ENCODE measurements at regions of chr4 and their contacts with region 1.

Region 1: DNA sequence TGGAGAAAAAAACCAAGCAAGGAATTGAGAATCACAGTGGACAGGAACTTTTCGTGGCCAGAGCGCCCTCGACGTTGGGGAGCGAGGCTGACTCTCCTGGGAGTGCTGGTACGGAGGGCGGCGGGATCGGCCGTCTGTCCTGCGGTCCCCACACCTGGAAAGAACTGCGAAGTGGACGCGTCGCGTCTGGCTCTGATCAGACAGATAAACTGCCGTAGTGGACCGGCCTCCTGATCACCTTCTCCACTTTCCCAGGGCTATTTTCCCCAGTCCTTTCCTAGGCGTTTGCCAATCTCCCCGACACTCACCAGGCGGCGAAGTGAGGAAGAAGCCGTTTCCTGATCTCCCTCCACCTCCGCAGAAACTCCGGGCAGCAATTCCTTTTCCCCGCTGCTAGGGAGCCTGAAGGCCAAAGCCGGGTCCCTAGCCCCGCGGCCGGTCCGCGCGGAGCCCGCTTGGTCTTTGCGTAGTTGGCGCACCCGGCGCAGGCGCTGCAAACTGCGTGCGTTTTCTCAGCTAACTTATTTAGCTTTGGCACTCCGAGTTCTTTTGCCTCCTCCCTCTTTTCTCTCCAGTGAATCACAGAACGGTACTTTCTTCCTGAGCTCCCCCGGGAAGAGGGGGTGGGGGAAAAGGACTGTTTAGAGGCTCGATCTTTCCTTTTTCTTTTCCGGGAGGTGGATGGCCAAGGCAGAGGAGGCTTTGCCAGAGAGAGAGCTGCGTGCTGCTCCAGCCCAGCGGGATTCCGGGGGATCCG is at the start of gene ARSJ:
- DNase-seq: peak; percentile 87
- H3K4me3 Mint-ChIP-seq: peak within 1 kb of the TSS; percentile 94
- H3K27ac Mint-ChIP-seq: peak within 1 kb of the TSS; percentile 95
- H3K4me1 Mint-ChIP-seq: peaks cover 19% of the 10 kb centered on the region
- H3K27me3 Mint-ChIP-seq: no peaks in the 10 kb centered on the region
- CTCF ChIP-seq: peak; percentile 34
- total RNA-seq, gene ARSJ: 36.2 and 50.7 TPM in 2 replicates

Region 2: GRCh38 chr4:113761620-113762185 is 217.6 kb before region 1 on chr4 and contains the start of gene CAMK2D:
- CTCF ChIA-PET with region 1: no interaction called
- POLR2A ChIA-PET with region 1: interaction called, 40 read pairs
- intact Hi-C with region 1: loop called (anchors 2 kb)
- DNase-seq: peak; percentile 89
- H3K4me3 Mint-ChIP-seq: peak within 1 kb of the TSS; percentile 99
- H3K27ac Mint-ChIP-seq: peak within 1 kb of the TSS; percentile 96
- H3K4me1 Mint-ChIP-seq: peaks cover 13% of the 10 kb centered on the region
- H3K27me3 Mint-ChIP-seq: no peaks in the 10 kb centered on the region
- CTCF ChIP-seq: no peak
- total RNA-seq, gene CAMK2D: 32.1 and 55.1 TPM in 2 replicates

Region 3: DNA sequence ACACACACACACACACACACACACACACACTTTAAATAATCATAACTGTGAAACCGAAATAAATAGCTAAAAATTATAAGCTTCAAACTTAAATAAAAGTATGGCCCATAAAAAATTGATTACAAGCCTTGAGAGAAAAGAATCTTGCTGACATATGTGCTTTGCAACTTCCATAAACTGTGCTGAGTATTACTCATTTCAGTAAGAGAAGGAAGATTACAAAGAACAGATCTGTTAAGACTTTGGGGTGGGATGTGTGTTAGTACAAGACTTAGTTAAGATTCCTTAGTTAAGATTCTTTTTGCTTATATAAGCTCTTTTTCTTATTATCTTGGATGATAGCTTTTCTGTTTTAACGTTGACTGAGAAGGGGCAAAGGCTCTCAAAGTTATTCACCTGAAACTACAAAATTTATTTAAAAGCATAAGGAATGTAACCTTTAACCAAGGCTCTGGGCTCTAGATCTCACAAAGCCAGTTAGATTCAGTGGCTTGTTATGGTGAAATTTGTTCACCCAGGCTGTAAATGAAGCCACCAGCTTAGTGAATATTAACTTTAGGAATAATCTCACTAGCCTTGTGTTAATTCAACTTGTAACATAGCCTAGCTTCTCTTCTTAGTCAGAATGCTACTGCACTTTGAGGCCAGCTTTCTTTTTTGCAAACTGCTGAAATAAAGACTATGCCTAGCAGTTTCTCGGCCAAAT is 58.1 kb before region 1 on chr4:
- CTCF ChIA-PET with region 1: no interaction called
- POLR2A ChIA-PET with region 1: interaction called, 12 read pairs
- intact Hi-C with region 1: no loop called
- DNase-seq: no peak
- H3K4me3 Mint-ChIP-seq: no peak overlapping the region
- H3K27ac Mint-ChIP-seq: no peak overlapping the region
- H3K4me1 Mint-ChIP-seq: peaks cover 34% of the 10 kb centered on the region
- H3K27me3 Mint-ChIP-seq: no peaks in the 10 kb centered on the region
- CTCF ChIP-seq: no peak

Region 4: GRCh38 chr4:114005569-114006442 is 26.5 kb after region 1 on chr4:
- CTCF ChIA-PET with region 1: interaction called, 4 read pairs
- POLR2A ChIA-PET with region 1: interaction called, 12 read pairs
- intact Hi-C with region 1: no loop called
- DNase-seq: peak; percentile 60
- H3K4me3 Mint-ChIP-seq: no peak overlapping the region
- H3K27ac Mint-ChIP-seq: peak overlapping the region; percentile 55
- H3K4me1 Mint-ChIP-seq: peaks cover 19% of the 10 kb centered on the region
- H3K27me3 Mint-ChIP-seq: no peaks in the 10 kb centered on the region
- CTCF ChIP-seq: no peak

Region 5: DNA sequence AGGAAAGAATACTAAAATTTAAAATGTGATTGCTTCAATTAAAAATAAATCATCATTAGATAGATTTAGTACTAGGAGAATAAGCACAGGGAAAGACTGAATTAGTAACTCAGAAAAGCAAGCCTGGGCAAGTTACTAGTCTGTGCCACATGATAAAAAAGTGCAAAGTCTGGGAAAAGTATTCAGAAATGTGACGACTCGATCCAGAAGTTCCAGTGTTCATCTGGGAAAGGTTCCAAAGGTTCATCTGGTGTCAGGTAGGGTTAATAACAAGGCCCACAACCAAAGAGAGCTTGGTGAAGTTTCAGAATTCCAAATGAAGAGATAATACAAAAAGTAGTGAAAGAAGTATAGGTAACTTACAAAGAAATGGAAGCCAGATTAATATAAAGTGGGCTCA is 78.4 kb after region 1 on chr4:
- CTCF ChIA-PET with region 1: no interaction called
- POLR2A ChIA-PET with region 1: interaction called, 22 read pairs
- intact Hi-C with region 1: loop called (anchors 5 kb)
- DNase-seq: peak; percentile 74
- H3K4me3 Mint-ChIP-seq: peak overlapping the region; percentile 8
- H3K27ac Mint-ChIP-seq: peak overlapping the region; percentile 78
- H3K4me1 Mint-ChIP-seq: peaks cover 13% of the 10 kb centered on the region
- H3K27me3 Mint-ChIP-seq: no peaks in the 10 kb centered on the region
- CTCF ChIP-seq: no peak

Region 6: GRCh38 chr4:114263233-114263632 is 283.9 kb after region 1 on chr4:
- CTCF ChIA-PET with region 1: no interaction called
- POLR2A ChIA-PET with region 1: interaction called, 13 read pairs
- intact Hi-C with region 1: no loop called
- DNase-seq: peak; percentile 28
- H3K4me3 Mint-ChIP-seq: no peak overlapping the region
- H3K27ac Mint-ChIP-seq: peak overlapping the region; percentile 83
- H3K4me1 Mint-ChIP-seq: peaks cover 25% of the 10 kb centered on the region
- H3K27me3 Mint-ChIP-seq: no peaks in the 10 kb centered on the region
- CTCF ChIP-seq: no peak

Region 7: DNA sequence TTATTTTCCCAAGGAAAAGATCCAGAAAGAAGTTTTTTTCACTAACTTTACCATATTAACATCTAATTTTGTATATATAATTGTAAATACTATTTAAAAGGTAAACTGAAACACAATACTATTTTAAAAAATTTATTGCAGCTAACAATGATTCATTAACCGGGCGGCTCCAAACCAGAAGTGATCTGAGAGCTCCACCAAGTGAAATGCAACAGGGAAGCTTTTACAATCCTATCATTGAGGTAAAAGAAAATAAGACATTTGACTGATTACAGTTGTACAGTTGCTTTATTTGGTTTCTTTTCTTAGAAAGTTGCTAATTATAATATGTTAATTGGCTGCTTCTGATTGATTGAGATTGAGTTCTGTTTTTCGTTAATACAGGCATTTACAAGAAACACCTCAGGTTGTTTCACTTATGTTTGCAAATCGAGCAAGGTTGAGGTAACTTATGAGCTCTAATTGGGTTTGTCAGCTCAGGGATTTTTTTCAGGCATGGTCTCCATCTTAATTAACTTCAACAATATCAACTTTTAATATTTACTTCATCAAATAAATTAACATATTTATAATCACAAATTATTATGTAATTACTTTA is 399.1 kb after region 1 on chr4:
- CTCF ChIA-PET with region 1: interaction called, 5 read pairs
- POLR2A ChIA-PET with region 1: interaction called, 11 read pairs
- intact Hi-C with region 1: loop called (anchors 1 kb)
- DNase-seq: peak; percentile 55
- H3K4me3 Mint-ChIP-seq: no peak overlapping the region
- H3K27ac Mint-ChIP-seq: no peak overlapping the region
- H3K4me1 Mint-ChIP-seq: no peaks in the 10 kb centered on the region
- H3K27me3 Mint-ChIP-seq: no peaks in the 10 kb centered on the region
- CTCF ChIP-seq: peak; percentile 70

Measured in MCF 10A (cell line).